Heart right ventricle (tissue), 16 donors: ENCODE measurements at regions of chr5 and their contacts with region 1.

Region 1: DNA sequence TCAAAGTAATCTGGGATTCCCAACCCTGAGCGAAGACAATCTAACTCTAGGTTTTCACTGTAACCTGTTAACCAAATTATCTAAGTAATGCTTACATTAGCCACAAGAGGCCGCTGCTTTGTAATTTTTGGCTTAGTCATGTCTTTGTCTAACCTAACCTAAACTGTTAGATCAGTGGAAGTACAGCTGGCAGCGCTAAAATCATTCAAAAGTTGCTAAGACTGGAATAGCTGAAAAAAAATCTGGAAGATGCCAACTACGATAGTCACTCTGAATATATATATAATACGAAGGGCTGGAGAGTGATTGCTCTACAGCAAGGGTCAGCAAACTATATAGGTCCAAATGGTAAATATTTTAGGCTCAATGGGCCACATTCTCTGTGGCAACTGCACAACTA is 60.2 kb downstream of the FBXO38 start:
- DNase-seq: peak in 1 of 2 donors; percentile 73
- ATAC-seq: peak; percentile 71 to 86 (median 80)
- H3K4me3 ChIP-seq: no peak overlapping the region
- H3K27ac ChIP-seq: peak overlapping the region in 2 of 10 donors; percentile 13 to 33
- H3K4me1 ChIP-seq: peaks cover 0 to 32% (median 3%) of the 10 kb centered on the region in 9 donors
- H3K27me3 ChIP-seq: no peaks in the 10 kb centered on the region
- CTCF ChIP-seq: peak; percentile 48 to 84 (median 77)

Region 2: DNA sequence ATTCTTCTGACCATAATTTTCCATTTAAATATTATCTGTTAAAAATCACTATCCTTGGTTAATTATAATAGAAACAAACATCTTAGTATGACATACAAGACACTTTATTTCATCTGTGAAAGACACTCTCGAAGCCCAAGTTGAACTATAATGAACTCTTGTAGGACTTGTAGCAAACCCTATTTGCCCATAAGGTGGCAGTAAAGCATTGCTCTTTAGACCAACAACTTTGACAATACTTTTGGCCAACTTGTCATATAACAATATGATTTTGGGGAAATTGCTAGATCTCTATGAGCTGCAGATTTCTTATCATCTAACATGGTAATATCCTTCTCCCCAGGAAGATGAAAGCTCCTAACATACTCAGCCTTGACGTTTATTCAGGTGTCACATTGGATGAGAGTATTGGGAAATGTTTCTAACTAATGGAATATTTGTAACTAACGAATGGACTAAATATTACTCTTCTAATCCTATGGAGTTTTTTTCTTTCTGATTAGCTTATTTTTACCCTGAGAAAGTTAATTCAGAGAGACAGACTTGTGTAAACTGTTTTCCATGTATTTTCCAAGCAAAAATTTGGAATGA is 264.7 kb before region 1 on chr5:
- intact Hi-C with region 1: loop called in 3 of 10 experiments (anchors 5 to 10 kb)
- DNase-seq: peak in 1 of 2 donors; percentile 8
- ATAC-seq: peak in 4 of 8 donors; percentile 44 to 60 (median 54)
- H3K4me3 ChIP-seq: no peak overlapping the region
- H3K27ac ChIP-seq: no peak overlapping the region
- H3K4me1 ChIP-seq: no peaks in the 10 kb centered on the region
- H3K27me3 ChIP-seq: no peaks in the 10 kb centered on the region
- CTCF ChIP-seq: peak; percentile 40 to 86 (median 79)

Region 3: DNA sequence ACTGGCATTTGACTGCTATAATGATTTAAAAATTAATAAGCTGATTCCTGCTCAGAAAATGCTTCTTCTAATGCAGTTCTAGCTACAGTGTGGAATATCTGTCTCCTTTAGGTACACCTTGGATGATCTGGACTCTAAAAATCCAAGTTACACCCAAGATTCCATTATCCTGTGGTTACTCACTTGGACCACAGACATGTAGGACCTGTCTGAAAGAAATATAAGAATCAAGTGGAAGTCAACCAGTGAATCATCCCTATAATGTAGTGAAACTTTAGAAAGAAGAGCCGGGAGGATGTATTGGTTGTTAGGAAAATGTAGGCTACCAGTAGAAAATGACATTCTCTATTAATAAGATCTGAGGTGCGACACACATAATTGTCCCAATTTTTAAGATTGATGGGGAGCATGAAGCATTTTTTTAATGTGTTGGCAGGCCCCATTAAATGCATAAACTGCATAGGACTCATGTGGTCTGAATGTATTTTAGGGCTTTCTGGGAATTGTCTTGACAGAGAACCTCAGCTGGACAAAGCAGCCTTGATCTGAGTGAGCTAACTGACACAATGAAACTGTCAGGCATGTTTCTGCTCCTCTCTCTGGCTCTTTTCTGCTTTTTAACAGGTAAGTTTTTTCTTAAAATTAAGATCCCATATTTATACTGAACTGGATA is 241.3 kb before region 1 on chr5 and contains the start of gene SPINK6:
- intact Hi-C with region 1: no loop called
- DNase-seq: no peak
- ATAC-seq: no peak
- H3K4me3 ChIP-seq: no peak within 1 kb of the TSS
- H3K27ac ChIP-seq: no peak within 1 kb of the TSS
- H3K4me1 ChIP-seq: peaks cover 0 to 16% (median 0%) of the 10 kb centered on the region in 9 donors
- H3K27me3 ChIP-seq: no peaks in the 10 kb centered on the region
- CTCF ChIP-seq: no peak
- total RNA-seq, gene SPINK6: not detected

Region 4: GRCh38 chr5:148290271-148291195 is 153.5 kb before region 1 on chr5:
- intact Hi-C with region 1: loop called in 1 of 10 experiments (anchors 10 kb)
- DNase-seq: no peak
- ATAC-seq: peak in 5 of 8 donors; percentile 16 to 72 (median 65)
- H3K4me3 ChIP-seq: no peak overlapping the region
- H3K27ac ChIP-seq: no peak overlapping the region
- H3K4me1 ChIP-seq: no peaks in the 10 kb centered on the region
- H3K27me3 ChIP-seq: no peaks in the 10 kb centered on the region
- CTCF ChIP-seq: peak; percentile 15 to 69 (median 49)

Region 5: DNA sequence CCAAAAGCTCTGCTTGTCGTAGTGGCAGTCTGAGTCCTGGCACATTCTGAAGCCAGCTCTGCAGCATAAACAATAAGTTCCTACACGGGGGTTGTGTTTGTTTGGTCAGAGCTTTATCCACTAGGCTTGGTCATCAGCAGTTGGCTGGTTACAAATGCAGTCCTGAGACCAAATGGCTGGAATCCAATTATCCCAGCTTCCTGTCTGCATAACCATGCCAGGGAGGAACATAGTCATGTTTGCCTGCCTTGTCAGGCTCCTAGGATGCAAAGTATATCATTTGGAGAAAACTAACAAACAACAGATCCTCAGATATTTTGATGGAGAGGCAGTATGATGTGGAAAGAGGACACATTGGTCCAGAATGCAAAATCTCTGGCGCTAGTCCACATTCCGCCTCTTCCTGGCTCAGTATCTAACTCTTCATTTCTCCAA is 25.5 kb after region 1 on chr5:
- intact Hi-C with region 1: no loop called
- DNase-seq: peak in 1 of 2 donors; percentile 60
- ATAC-seq: peak; percentile 19 to 84 (median 68)
- H3K4me3 ChIP-seq: no peak overlapping the region
- H3K27ac ChIP-seq: peak overlapping the region; percentile 7 to 81 (median 62)
- H3K4me1 ChIP-seq: peaks cover 0 to 35% (median 20%) of the 10 kb centered on the region in 9 donors
- H3K27me3 ChIP-seq: no peaks in the 10 kb centered on the region
- CTCF ChIP-seq: no peak

Region 6: GRCh38 chr5:148482691-148483462 is 38.9 kb after region 1 on chr5:
- intact Hi-C with region 1: loop called in 1 of 10 experiments (anchors 1 kb)
- DNase-seq: peak; percentile 36 to 50
- ATAC-seq: peak in 7 of 8 donors; percentile 29 to 66 (median 62)
- H3K4me3 ChIP-seq: peak overlapping the region in 5 of 10 donors; percentile 10 to 24 (median 15)
- H3K27ac ChIP-seq: peak overlapping the region in 2 of 10 donors; percentile 29 to 51
- H3K4me1 ChIP-seq: peaks cover 0 to 13% (median 7%) of the 10 kb centered on the region in 9 donors
- H3K27me3 ChIP-seq: peaks cover 0 to 10% (median 0%) of the 10 kb centered on the region in 7 donors
- CTCF ChIP-seq: peak; percentile 21 to 76 (median 71)

Region 7: DNA sequence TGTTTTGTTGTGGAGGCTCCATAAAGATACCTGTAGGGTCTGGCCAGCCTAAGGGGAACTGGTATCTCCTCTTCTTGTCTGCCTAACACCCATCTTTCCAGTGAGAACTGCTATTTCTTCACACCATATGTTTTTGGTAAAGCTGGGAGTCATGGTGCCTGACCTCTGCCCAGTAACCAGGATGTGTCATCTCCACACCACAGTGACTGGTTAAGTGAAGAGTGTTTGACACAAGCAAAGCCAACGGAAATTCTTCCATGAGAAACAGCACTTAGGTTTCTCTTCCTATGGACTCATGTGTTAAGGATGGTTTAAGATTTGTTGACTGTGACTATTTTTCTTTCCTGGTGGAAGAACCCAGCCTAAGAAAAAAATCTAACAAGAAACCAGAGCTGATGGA is 98.8 kb after region 1 on chr5:
- intact Hi-C with region 1: no loop called
- DNase-seq: no peak
- ATAC-seq: peak in 1 of 8 donors; percentile 15
- H3K4me3 ChIP-seq: no peak overlapping the region
- H3K27ac ChIP-seq: no peak overlapping the region
- H3K4me1 ChIP-seq: peaks cover 0 to 11% (median 0%) of the 10 kb centered on the region in 9 donors
- H3K27me3 ChIP-seq: no peaks in the 10 kb centered on the region
- CTCF ChIP-seq: no peak

Region 8: DNA sequence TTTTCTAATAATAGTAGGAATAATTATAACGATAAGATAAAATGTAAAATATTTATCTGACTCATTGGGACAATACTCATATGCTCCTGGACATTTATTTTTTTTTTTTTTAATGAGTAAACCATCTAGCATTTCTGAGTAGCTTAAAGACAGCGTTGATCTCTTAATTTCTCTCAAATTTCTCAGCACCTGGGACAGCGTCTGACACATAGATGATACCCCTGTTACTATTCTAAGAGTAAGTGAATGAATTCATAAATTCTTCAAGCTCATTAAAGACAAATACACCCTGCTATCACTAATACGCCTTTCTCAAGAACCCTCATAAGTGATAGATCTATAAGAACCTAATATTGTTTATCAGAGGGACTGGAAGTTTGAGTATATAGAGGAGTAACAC is 222.4 kb after region 1 on chr5:
- intact Hi-C with region 1: no loop called
- DNase-seq: no peak
- ATAC-seq: no peak
- H3K4me3 ChIP-seq: no peak overlapping the region
- H3K27ac ChIP-seq: no peak overlapping the region
- H3K4me1 ChIP-seq: no peaks in the 10 kb centered on the region
- H3K27me3 ChIP-seq: peaks cover 0 to 6% (median 0%) of the 10 kb centered on the region in 7 donors
- CTCF ChIP-seq: no peak

Region 9: DNA sequence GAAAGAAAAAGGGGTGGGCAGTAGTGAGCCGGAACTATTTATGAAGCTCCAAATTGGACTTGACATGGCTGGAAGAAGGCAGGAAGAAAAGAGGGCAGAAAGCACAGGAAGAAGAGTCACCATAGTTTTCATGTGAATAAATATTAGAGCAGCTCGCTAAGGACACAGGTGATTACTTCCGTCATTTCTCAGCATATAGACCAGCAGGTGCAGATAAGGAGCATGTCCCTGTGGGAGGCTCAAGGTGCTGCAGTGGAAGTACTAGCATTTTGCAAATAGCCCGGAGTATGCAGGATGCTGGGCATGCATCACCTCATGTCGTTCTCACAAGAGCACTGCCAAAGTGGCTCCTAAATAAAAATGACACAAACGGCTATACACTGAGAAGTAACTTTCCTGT is 281.7 kb after region 1 on chr5:
- intact Hi-C with region 1: loop called in 7 of 10 experiments (anchors 2 to 5 kb)
- DNase-seq: no peak
- ATAC-seq: no peak
- H3K4me3 ChIP-seq: no peak overlapping the region
- H3K27ac ChIP-seq: no peak overlapping the region
- H3K4me1 ChIP-seq: peaks cover 0 to 7% (median 0%) of the 10 kb centered on the region in 9 donors
- H3K27me3 ChIP-seq: peaks cover 0 to 4% (median 0%) of the 10 kb centered on the region in 7 donors
- CTCF ChIP-seq: no peak

Region 10: GRCh38 chr5:149035372-149035790 is 591.4 kb after region 1 on chr5:
- intact Hi-C with region 1: loop called in 4 of 10 experiments (anchors 5 to 10 kb)
- DNase-seq: peak; percentile 70 to 81
- ATAC-seq: peak; percentile 83 to 94 (median 91)
- H3K4me3 ChIP-seq: no peak overlapping the region
- H3K27ac ChIP-seq: no peak overlapping the region
- H3K4me1 ChIP-seq: peaks cover 0 to 53% (median 25%) of the 10 kb centered on the region in 9 donors
- H3K27me3 ChIP-seq: no peaks in the 10 kb centered on the region
- CTCF ChIP-seq: peak; percentile 64 to 95 (median 90)